Activated CD4-positive, alpha-beta memory T cell treated with anti-CD3 and anti-CD28 coated beads, Interleukin-2, amount 10 ng/mL, durations not matched to agents 7 days and 5 days (primary cell): ENCODE measurements at regions of chr4 and their contacts with region 1.

Region 1: DNA sequence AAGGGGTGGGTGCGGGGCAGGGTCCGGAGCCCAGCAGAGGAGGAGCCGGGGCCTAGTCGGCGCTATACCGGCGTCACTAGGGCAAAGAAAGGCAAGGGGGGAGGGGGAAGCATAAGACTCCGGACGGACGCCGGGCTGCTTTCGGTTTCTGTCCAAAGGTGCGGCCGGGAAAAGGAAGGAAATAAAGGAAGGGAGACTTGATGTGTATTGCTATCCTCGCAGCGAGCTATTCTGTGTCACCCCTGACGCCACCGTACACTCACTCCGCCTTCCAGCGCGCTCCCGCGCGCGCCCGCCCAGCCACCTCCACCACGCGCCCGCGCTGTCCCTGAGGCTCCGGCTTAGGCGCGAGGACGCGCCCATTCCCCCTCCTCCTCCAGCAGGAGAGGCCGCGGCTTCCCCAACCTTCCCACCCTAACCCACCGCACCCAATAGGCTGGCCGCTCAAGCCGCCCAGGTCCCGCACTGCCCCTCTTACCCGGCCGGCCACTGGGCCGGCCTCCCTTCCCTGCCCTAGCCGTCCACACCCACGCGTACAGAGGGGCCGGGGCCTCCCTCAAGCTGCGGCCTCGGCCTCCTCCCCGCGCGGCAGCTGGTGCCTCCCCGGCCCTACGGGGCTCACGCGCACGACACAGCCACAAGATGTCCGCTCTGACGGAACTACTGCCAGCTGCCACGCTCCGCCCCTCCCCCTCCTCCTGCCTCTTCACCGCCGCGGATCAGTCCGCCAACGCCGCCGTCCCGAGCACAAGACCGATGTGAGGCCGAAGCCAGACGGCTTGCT is at the start of gene UBE2D3:
- DNase-seq: peak; percentile 95
- H3K4me3 Mint-ChIP-seq: no peak within 1 kb of the TSS
- H3K27ac Mint-ChIP-seq: no peak within 1 kb of the TSS
- H3K4me1 Mint-ChIP-seq: peaks cover 39% of the 10 kb centered on the region
- H3K27me3 Mint-ChIP-seq: no peaks in the 10 kb centered on the region
- total RNA-seq, gene UBE2D3: 378 to 380 TPM

Region 2: DNA sequence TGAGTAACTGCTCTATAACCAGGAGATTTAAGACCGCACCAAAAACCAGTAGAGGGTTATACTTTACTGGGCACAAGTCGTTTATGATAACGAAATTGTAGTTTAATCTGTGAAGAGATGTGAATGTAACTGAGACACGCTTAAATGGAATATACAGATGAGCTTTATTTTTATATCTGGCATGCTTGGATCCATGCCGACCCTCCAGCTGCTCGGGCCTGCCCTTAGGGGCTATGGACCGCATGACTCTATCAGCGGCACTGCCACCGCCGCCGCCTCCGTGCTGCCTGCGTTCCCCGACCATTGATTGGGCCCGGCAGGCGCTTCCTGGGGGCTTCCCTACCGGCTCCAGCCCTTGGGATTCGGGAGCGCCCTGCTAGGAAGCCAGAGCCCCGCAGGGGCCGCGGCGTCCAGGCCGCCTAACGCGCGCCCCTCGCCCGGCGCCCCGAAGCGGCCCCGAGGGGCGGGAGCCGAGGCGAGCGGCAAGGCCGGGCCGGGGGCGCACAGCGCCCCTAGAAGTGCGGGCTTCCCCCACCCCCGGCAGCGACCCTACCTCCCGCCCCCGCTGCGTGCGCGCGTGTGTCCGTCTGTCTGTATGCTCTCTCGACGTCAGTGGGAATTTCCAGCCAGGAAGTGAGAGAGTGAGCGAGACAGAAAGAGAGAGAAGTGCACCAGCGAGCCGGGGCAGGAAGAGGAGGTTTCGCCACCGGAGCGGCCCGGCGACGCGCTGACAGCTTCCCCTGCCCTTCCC is 326.2 kb before region 1 on chr4 and contains the start of gene NFKB1:
- CTCF ChIA-PET with region 1: no interaction called
- POLR2A ChIA-PET with region 1: interaction called, 43 read pairs
- DNase-seq: peak; percentile 78
- H3K4me3 Mint-ChIP-seq: peak within 1 kb of the TSS; percentile 89
- H3K27ac Mint-ChIP-seq: peak within 1 kb of the TSS; percentile 87
- H3K4me1 Mint-ChIP-seq: peaks cover 26% of the 10 kb centered on the region
- H3K27me3 Mint-ChIP-seq: peaks cover 3% of the 10 kb centered on the region
- total RNA-seq, gene NFKB1: 84.7 to 88.1 TPM

Region 3: DNA sequence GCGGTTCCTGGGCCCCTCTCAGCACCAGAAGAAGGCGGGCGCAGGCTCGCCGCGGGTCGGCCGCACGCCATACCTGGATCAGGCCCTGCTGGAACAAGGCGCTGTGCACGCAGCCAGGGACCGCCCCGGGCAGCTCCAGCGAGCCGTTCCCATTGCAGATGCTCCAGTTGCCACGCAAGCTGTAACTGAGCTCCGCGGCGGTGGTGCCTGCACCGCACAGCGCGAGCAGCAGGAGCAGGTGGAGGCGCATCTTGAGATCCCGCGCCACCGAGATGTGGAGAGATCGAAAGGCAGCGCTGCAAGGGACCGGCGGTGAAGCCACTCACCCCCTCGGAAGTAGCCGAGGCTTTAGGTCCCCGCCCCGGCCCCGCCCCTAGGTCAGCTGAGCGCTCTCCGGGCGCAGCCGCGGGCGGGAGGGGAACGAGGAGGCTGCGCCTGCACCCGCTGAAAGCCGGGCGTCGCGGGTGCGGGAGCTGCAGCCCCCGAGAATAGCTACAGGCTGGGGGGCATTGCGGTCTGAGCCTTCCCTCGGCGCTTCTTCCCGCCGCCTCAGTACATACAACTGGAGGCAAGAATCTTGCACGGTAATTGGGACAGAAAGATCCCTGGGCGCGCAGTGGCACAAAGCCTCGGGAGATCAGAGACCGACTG is 66.3 kb before region 1 on chr4 and contains the start of gene MANBA:
- CTCF ChIA-PET with region 1: interaction called, 5 read pairs
- POLR2A ChIA-PET with region 1: interaction called, 35 read pairs
- DNase-seq: peak; percentile 89
- H3K4me3 Mint-ChIP-seq: peak within 1 kb of the TSS; percentile 99
- H3K27ac Mint-ChIP-seq: peak within 1 kb of the TSS; percentile 81
- H3K4me1 Mint-ChIP-seq: peaks cover 26% of the 10 kb centered on the region
- H3K27me3 Mint-ChIP-seq: peaks cover 8% of the 10 kb centered on the region
- total RNA-seq, gene MANBA: 13.6 to 14.5 TPM

Region 4: GRCh38 chr4:102815981-102816380 is 11.1 kb before region 1 on chr4:
- CTCF ChIA-PET with region 1: interaction called, 8 read pairs
- POLR2A ChIA-PET with region 1: interaction called, 106 read pairs
- DNase-seq: no peak
- H3K4me3 Mint-ChIP-seq: no peak overlapping the region
- H3K27ac Mint-ChIP-seq: no peak overlapping the region
- H3K4me1 Mint-ChIP-seq: peaks cover 80% of the 10 kb centered on the region
- H3K27me3 Mint-ChIP-seq: no peaks in the 10 kb centered on the region

Region 5: GRCh38 chr4:102868781-102869568 is 41.9 kb after region 1 on chr4 and contains the start of gene CISD2:
- CTCF ChIA-PET with region 1: interaction called, 34 read pairs
- POLR2A ChIA-PET with region 1: interaction called, 510 read pairs
- DNase-seq: peak; percentile 93
- H3K4me3 Mint-ChIP-seq: peak within 1 kb of the TSS; percentile 92
- H3K27ac Mint-ChIP-seq: peak within 1 kb of the TSS; percentile 99
- H3K4me1 Mint-ChIP-seq: peaks cover 71% of the 10 kb centered on the region
- H3K27me3 Mint-ChIP-seq: no peaks in the 10 kb centered on the region
- total RNA-seq, gene CISD2: 37.9 to 39.8 TPM

Region 6: GRCh38 chr4:103099691-103100392 is 272.8 kb after region 1 on chr4 and contains the start of gene BDH2:
- CTCF ChIA-PET with region 1: interaction called, 11 read pairs
- POLR2A ChIA-PET with region 1: interaction called, 7 read pairs
- DNase-seq: peak; percentile 42
- H3K4me3 Mint-ChIP-seq: peak within 1 kb of the TSS; percentile 76
- H3K27ac Mint-ChIP-seq: peak within 1 kb of the TSS; percentile 76
- H3K4me1 Mint-ChIP-seq: peaks cover 21% of the 10 kb centered on the region
- H3K27me3 Mint-ChIP-seq: no peaks in the 10 kb centered on the region
- total RNA-seq, gene BDH2: 22.5 to 23.6 TPM